Left ventricle myocardium superior (tissue), 1 donor: ENCODE measurements at regions of chr11 and their contacts with region 1.

Region 1: GRCh38 chr11:104151404-104152204 is 12.3 kb downstream of the PDGFD start:
- DNase-seq: no peak
- ATAC-seq: no peak

Region 2: DNA sequence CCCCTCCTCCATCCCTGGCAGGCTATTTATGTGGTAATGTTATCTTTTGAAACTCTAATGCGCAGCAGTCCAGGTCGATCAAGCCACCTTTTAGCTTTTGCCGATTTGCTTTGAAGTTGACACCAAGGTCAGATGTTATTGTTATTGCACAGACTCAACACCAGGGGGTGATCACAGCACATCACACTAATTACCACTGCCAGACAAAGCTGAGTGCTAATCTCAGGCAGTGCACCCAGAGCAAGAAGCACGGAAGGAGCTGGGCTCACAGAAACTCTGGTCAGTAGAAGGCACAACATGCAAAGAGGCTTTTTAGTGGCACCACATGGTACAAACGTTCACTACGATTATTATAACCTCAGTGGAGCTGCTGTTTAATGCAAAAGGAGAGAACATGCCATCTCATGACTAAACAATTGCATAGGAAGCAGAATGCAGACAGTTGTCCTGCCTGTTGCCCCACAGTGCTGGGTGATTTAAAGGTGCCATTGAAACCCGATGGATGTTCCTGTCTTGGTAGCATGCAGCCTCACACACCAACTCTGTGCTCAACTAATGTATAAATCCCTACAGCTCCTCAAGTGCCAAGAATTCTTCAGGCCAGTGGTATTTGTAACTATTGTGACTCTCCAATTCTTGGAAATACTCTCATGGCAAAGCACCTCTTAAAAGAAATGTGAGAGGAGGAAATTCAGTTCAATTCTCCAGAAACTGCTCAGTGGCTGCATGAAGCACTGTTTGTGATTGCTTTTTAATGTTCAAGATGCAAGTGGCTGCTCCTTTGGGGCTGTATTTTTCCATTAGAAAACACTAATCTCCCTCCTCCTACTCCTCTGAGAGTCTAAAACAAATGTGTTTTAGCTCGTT is 469.1 kb before region 1 on chr11:
- intact Hi-C with region 1: loop called (anchors 1 kb)
- DNase-seq: peak; percentile 40
- ATAC-seq: peak; percentile 98